Sciatic nerve (tissue), 2 donors: ENCODE measurements at regions of chr21 and their contacts with region 1.

Region 1: DNA sequence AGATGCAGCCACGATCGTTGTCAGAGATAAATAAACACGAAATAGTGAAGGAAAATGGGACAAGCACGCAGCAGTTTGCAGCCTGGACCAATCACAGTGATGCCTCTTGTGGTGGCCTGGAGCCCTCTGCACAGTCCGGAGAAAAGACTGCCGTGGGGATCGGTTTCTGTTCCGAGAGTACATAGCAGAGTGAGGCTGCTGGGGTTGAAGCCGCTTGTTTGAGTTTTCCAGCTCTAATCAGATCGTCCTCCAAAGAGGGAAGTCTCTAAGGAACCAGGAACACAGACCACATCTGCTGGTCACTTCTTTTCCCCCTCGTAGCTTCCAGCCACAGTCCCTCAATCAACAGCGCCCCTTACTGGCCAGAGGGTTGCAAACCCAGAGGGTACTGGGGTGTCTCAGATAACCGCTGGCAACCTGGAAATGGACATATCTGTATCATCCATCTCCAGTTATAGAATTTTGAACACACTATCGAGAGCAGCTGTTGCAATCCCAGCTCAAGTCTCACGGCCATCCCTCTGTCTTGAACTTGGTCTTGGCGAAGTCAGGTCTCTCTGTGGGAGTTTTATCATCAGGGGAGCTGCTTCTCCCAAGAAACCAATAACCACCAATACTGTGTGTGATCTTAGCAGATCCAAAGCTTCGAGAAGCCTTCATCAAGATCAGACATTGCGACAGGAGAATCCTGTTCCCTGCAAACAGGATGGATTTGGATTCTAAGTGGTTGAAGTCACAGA is 57.4 kb downstream of the OLIG1 start:
- DNase-seq: peak; percentile 90
- ATAC-seq: peak; percentile 96

Region 2: GRCh38 chr21:32929633-32930038 is 197.7 kb before region 1 on chr21:
- intact Hi-C with region 1: loop called (anchors 10 kb)
- DNase-seq: no peak
- ATAC-seq: no peak

Region 3: GRCh38 chr21:32949701-32950100 is 177.6 kb before region 1 on chr21:
- intact Hi-C with region 1: no loop called
- DNase-seq: no peak
- ATAC-seq: no peak

Region 4: DNA sequence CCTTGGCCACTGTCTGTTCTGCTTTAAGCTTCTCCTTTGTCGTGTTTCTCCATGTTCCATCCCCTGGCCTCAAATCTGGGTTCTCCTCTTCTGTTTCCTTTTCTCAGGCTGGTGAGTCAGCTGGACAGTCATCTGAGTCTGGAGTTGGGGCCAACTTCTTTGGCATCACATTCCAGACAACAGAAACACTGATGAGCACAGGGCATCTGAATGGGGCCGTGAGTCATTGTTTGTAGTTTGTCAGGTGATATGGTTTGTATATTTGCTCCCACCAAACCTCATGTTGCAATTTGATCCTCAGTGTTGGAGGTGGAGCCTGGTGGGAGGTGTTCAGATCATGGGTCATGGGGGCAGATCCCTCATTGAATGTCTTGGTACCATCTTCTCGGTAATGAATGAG is 115.9 kb before region 1 on chr21:
- intact Hi-C with region 1: loop called (anchors 10 kb)
- DNase-seq: no peak
- ATAC-seq: no peak